ENCODE measurements at regions of chr1 and their contacts with region 1.

Region 1: DNA sequence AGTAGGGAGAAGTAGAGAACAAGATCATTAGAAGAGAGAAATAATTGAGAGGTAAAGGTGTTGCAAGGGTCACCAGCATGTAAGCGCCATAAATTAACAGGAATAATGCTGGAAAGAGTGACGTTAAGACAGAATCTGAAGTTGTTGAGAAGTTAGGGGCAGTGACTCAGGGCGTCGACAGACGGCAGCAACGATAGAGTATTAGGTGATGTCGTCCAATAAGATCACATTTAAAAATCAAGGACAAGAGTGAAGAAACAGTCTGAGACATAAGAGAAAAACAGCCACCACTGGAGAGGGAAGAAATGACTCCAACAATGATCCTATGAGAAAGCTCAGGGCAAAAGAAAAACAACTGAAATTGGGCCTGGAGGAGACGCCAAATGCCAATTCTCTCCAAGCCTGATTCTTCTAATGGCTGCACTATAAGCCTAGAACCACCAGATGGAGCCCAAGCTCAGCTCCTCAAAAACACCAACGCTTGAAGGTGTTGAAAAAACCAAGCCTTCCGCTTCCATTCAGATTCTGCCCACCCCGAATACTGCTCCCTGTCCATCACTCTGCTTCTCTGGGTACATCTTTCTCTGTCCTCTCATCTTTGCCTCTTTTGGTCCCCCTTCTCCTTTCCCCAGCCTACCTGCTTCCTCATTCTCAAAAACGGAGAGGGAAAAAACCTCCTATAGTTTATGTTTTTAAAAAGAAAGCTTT is 70.0 kb downstream of the LUZP1 start:
- DNase-seq: peak; percentile 62
- ATAC-seq: peak; percentile 55; the same call in 2 of the 3 replicates
- H3K4me3 ChIP-seq: no peak overlapping the region
- H3K27ac ChIP-seq: no peak overlapping the region
- H3K4me1 ChIP-seq: peaks cover 50% of the 10 kb centered on the region
- H3K27me3 ChIP-seq: no peaks in the 10 kb centered on the region
- CTCF ChIP-seq: peak; percentile 89
- EP300 ChIP-seq: no peak
- POLR2A ChIP-seq: no peak
- RAD21 ChIP-seq: peak; percentile 92

Region 2: DNA sequence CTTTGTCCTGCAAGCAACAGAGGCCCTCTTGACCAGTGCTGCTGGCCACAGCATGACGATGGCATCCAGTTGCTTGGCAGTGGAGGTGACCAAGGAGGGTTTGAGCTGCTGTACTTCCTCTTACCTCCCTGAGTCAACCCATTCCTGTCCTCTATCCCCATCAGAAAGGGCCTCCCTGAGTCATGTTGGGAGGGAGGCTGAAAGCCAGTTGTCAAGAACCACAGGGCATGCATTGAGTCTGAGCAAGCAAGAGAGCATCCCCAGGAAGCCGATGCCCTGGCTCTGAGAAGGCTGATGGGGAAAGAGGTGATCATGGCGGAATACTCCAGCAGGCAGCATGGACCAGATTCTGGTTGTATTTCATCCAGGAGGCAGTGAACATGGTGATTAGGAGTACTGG is 195.5 kb before region 1 on chr1:
- CTCF ChIA-PET with region 1: no interaction called
- POLR2A ChIA-PET with region 1: no interaction called
- in situ Hi-C with region 1: no loop called
- intact Hi-C with region 1: no loop called
- DNase-seq: no peak
- ATAC-seq: no peak
- H3K4me3 ChIP-seq: no peak overlapping the region
- H3K27ac ChIP-seq: no peak overlapping the region
- H3K4me1 ChIP-seq: no peaks in the 10 kb centered on the region
- H3K27me3 ChIP-seq: peaks cover 0 to 20% of the 10 kb centered on the region in 2 experiments; a peak in 3 of 5 replicates
- CTCF ChIP-seq: no peak
- EP300 ChIP-seq: no peak
- POLR2A ChIP-seq: no peak
- RAD21 ChIP-seq: no peak

Region 3: DNA sequence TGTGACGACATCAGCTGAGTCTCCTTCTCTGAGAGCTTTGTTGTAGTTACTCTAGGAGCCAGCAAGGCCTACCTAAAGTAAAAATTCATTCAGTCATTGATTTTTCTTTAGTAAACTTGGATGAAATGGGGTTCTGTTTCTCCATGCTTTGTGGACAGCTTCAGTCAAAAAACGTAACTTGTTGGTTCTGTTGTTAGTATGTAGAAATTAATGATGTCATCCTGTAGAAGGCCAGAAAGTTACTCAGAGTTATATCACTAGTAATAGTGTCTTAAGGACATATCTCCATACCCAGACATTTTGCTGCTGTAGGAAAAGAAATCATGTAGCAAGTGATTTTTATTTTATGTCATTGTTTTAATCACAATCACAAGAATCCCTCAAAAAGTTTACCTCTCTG is 36.3 kb before region 1 on chr1:
- CTCF ChIA-PET with region 1: no interaction called
- POLR2A ChIA-PET with region 1: no interaction called
- in situ Hi-C with region 1: no loop called
- intact Hi-C with region 1: no loop called
- DNase-seq: no peak
- ATAC-seq: no peak
- H3K4me3 ChIP-seq: no peak overlapping the region
- H3K27ac ChIP-seq: no peak overlapping the region
- H3K4me1 ChIP-seq: no peaks in the 10 kb centered on the region
- H3K27me3 ChIP-seq: no peaks in the 10 kb centered on the region
- CTCF ChIP-seq: no peak
- EP300 ChIP-seq: no peak
- POLR2A ChIP-seq: no peak
- RAD21 ChIP-seq: no peak

Region 4: DNA sequence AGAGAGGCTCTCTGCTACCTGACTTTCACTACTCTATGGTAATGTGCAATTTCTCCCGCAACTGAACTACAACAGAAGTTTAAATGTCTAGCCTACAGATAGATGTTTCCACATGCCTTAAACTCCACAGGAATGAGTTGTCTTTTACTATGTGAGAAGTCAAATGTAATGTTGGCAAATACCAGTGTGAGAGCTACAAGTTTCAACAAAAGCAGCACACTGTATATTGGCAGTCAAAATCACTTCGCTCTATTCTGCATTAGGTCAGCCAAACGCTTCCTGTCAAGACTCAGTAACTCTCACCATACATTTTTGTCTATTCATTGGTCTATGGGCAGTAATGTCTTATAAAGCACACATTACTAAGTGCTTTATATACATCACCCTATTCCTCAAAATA is 28.2 kb after region 1 on chr1:
- CTCF ChIA-PET with region 1: no interaction called
- POLR2A ChIA-PET with region 1: no interaction called
- in situ Hi-C with region 1: no loop called
- intact Hi-C with region 1: no loop called
- DNase-seq: no peak
- ATAC-seq: peak; percentile 21; the same call in 2 of the 3 replicates
- H3K4me3 ChIP-seq: no peak overlapping the region
- H3K27ac ChIP-seq: no peak overlapping the region
- H3K4me1 ChIP-seq: peaks cover 56% of the 10 kb centered on the region
- H3K27me3 ChIP-seq: no peaks in the 10 kb centered on the region
- CTCF ChIP-seq: no peak
- EP300 ChIP-seq: no peak
- POLR2A ChIP-seq: no peak
- RAD21 ChIP-seq: no peak

Region 5: GRCh38 chr1:23177438-23178380 is 79.1 kb after region 1 on chr1:
- CTCF ChIA-PET with region 1: interaction called, 110 read pairs
- POLR2A ChIA-PET with region 1: no interaction called
- in situ Hi-C with region 1: no loop called
- intact Hi-C with region 1: no loop called
- DNase-seq: peak; percentile 25
- ATAC-seq: peak; percentile 90
- H3K4me3 ChIP-seq: peak overlapping the region; percentile 64 to 84 (median 75)
- H3K27ac ChIP-seq: no peak overlapping the region
- H3K4me1 ChIP-seq: peaks cover 54% of the 10 kb centered on the region
- H3K27me3 ChIP-seq: peaks cover 0 to 8% of the 10 kb centered on the region in 2 experiments; a peak in 2 of 5 replicates
- CTCF ChIP-seq: peak; percentile 30; the same call in 1 of the 2 replicates
- EP300 ChIP-seq: no peak
- POLR2A ChIP-seq: no peak
- RAD21 ChIP-seq: peak; percentile 56

Region 6: GRCh38 chr1:23184212-23184934 is 85.8 kb after region 1 on chr1:
- CTCF ChIA-PET with region 1: interaction called, 110 read pairs
- POLR2A ChIA-PET with region 1: interaction called, 13 read pairs
- in situ Hi-C with region 1: loop called (anchors 5 kb)
- intact Hi-C with region 1: loop called (anchors 1 kb)
- DNase-seq: peak; percentile 44
- ATAC-seq: no peak
- H3K4me3 ChIP-seq: peak overlapping the region; percentile 39 to 62 (median 49); a peak in 5 of 6 replicates
- H3K27ac ChIP-seq: no peak overlapping the region
- H3K4me1 ChIP-seq: peaks cover 48% of the 10 kb centered on the region
- H3K27me3 ChIP-seq: 0 out of 5 replicates have a peak, but pooled peaks cover 0 to 1% of the 10 kb centered on the region in 2 experiments
- CTCF ChIP-seq: peak; percentile 83
- EP300 ChIP-seq: no peak
- POLR2A ChIP-seq: no peak
- RAD21 ChIP-seq: peak; percentile 80

Region 7: DNA sequence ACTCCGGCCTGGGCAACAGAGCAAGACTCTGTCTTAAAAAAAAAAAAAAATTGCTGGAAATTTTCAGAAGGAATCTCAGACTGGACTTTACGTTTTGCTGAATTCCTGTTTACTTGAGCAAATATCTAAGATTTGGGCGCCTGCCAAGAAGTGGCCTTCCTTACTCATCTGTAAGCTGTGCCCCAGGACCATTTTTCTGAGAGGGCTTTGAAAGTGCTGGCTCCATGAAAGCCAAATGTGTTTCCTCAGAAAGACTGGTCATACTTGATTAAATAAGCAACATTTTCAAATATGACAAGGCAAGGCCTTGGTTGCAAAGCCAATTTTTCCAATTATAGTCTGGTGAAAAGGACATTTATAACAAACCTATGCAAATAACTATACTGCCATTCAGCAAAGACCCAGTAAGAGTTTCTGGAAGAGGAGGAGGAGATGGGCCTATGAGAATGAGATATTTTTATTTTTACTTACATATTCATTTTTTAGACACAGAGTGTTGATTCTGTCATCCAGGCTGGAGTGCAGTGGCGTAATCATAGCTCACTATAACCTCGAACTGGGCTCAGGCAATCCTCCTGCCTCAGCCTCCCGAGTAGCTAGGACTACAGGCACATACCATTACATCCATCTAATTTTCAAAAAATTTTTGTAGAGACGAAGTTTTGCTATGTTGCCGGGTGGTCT is 175.0 kb after region 1 on chr1:
- CTCF ChIA-PET with region 1: no interaction called
- POLR2A ChIA-PET with region 1: no interaction called
- in situ Hi-C with region 1: loop called (anchors 10 kb)
- intact Hi-C with region 1: no loop called
- DNase-seq: peak; percentile 23
- ATAC-seq: no peak
- H3K4me3 ChIP-seq: no peak overlapping the region
- H3K27ac ChIP-seq: no peak overlapping the region
- H3K4me1 ChIP-seq: peaks cover 10% of the 10 kb centered on the region
- H3K27me3 ChIP-seq: no peaks in the 10 kb centered on the region; a peak in 1 of 5 replicates
- CTCF ChIP-seq: no peak
- EP300 ChIP-seq: no peak
- POLR2A ChIP-seq: no peak
- RAD21 ChIP-seq: no peak

Measured in HepG2 (cell line).